Heart right ventricle (tissue), 16 donors: ENCODE measurements at regions of chr10 and their contacts with region 1.

Region 1: DNA sequence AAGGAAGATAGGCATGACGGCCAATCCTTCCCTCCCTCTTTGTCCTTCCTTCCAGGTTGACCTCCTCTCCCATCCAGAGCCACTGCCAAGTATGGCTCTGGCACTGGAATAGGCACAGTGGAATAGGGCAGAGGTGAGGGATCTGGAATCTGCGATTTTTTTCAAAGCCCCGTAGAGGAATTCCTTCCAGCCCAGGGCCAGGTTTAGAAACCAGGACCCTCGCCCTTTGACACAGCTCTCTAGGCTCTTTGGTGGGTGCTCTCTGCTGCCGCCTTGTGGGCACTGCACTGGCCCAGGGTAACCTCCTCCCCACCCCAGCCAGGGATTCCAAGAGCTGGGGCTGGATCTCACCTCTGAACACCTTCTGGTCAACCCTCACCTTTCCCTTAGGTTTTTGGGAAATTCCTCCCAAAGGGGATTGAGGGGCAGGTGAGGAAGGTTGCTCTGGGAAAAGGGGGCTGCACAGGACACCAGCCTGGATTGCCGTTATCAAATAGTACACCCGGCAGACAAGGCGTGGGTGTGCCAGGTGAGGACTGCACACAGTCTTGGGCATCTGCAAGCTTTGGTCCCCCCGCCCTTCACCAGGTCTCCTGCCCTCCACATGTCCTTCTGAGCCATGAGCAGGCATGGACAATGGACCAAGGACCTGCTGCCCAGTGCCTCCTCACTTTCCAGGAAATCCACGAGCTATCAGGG is 22.8 kb downstream of the C10orf105 start:
- DNase-seq: peak; percentile 61 to 78
- ATAC-seq: peak; percentile 47 to 73 (median 70)
- H3K4me3 ChIP-seq: no peak overlapping the region
- H3K27ac ChIP-seq: peak overlapping the region in 2 of 10 donors; percentile 16 to 87
- H3K4me1 ChIP-seq: peaks cover 0 to 67% (median 57%) of the 10 kb centered on the region in 9 donors
- H3K27me3 ChIP-seq: no peaks in the 10 kb centered on the region
- CTCF ChIP-seq: peak; percentile 75 to 90 (median 84)

Region 2: DNA sequence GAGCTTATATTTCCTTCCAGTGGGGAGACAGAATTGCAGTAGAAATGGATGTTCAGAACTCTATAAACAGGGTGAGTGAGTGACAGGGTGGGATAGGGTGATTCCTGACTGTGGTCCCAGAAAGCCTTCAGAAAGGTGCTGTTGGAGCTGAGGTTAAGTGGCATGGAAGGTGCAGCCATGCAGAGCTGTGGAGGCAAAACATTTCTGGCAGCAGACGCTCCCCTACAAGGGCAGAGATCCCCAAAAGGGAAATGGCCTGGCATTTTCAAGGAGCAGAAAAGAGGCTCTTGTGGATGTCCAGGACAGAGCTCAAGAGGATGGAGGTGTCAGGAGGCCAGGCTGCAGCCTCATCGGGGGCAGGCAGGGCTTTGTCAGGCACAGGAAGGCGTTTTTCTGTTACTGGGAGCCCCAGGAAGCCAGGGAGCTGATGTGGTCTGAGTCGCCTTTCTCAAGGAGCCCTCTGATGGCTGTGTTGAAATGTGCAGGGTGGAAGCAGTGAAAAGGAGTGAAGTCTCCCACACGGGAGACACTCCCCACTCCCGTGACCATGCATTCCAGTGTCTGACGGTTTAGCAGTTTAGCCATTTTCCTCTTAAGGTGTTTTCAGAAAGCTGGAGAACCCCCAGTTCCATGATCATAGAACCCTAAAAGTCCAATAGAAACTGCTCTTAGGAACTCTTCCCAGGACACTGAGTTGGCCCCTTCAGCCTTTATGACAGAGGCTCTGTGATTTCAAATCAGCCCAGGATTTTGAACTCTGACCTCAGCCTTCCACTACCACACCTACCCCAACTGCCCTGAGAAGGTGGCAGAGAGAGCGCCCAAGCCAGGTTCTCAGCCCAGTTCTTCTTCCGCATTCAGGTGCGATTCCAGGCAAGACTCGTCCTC is 73.4 kb before region 1 on chr10:
- intact Hi-C with region 1: no loop called
- DNase-seq: peak in 1 of 2 donors; percentile 30
- ATAC-seq: peak in 5 of 8 donors; percentile 28 to 71 (median 54)
- H3K4me3 ChIP-seq: no peak overlapping the region
- H3K27ac ChIP-seq: no peak overlapping the region
- H3K4me1 ChIP-seq: peaks cover 0 to 33% (median 21%) of the 10 kb centered on the region in 9 donors
- H3K27me3 ChIP-seq: no peaks in the 10 kb centered on the region
- CTCF ChIP-seq: peak in 5 of 9 donors; percentile 18 to 47 (median 33)

Region 3: DNA sequence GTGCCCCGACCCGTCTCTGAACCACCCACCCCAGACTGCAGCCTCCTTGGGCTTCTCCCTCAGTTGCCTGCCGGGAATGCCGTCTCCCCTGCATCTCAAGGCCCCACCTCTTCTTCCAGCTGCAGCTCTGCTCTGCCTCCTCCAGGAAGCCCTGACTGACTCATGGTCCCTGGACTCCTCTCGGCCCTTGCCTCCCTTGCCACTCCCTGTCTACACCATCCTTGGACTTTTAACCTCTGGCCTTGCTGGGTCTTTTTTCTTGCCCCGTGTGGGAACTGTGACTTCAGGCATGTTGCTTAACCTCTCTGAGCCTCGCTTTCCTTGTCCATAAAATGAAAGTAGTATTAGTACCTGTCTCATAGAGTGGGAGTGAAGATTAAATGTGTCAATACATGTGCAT is 33.5 kb before region 1 on chr10:
- intact Hi-C with region 1: loop called in 2 of 10 experiments (anchors 5 kb)
- DNase-seq: no peak
- ATAC-seq: no peak
- H3K4me3 ChIP-seq: no peak overlapping the region
- H3K27ac ChIP-seq: no peak overlapping the region
- H3K4me1 ChIP-seq: no peaks in the 10 kb centered on the region
- H3K27me3 ChIP-seq: peaks cover 0 to 5% (median 0%) of the 10 kb centered on the region in 7 donors
- CTCF ChIP-seq: no peak

Region 4: DNA sequence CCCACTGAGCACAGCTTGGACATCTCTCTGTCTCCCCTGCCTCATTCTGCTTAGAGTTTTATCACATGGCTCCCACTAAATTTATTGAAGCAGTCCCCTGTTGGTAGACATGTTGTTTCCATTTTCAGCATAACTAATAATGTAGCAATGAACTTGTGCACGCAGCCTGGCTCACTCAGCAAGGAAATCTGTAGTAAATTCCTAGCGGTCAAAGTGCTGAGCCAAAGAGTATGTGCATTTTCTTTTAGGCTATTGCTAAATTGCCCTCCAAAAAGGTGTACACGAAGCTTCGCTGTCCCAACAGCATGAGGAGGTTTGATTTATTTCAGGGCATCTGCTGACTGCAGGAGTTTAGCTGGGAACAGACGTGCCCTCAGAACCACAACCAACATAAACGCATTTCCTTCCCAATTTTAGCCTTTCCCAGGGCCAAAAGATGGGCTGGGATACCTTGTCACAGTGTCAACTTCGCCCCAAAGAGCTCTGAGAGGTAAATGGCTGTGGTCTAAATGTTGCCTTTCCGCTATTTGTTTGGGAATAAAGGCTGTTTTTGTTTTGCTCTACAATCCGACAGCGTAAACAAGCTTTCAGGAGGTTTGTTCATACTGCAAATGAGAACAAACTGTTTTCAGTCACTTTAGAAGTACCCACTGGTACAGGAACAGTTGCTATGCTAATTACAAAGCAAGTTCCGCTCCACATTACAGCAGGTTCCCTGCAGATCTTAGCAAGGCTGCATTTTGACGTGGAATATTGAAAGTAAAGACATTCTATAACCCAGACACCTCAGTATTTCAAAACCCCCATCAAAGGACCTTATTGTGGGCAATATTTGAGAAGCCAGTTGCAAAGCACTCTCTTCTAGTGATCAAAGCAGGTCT is 59.8 kb after region 1 on chr10:
- intact Hi-C with region 1: no loop called
- DNase-seq: no peak
- ATAC-seq: peak in 2 of 8 donors; percentile 19 to 37
- H3K4me3 ChIP-seq: peak overlapping the region in 1 of 10 donors; percentile 12
- H3K27ac ChIP-seq: peak overlapping the region in 7 of 10 donors; percentile 18 to 95 (median 64)
- H3K4me1 ChIP-seq: peaks cover 0 to 93% (median 55%) of the 10 kb centered on the region in 9 donors
- H3K27me3 ChIP-seq: no peaks in the 10 kb centered on the region
- CTCF ChIP-seq: no peak